Psoas muscle (tissue), 8 donors: ENCODE measurements at regions of chr10 and their contacts with region 1.

Region 1: GRCh38 chr10:68735119-68735518 is 14.1 kb downstream of the CCAR1 start:
- DNase-seq: no peak
- ATAC-seq: no peak
- H3K4me3 ChIP-seq: no peak overlapping the region
- H3K27ac ChIP-seq: no peak overlapping the region
- H3K4me1 ChIP-seq: peaks cover 6% of the 10 kb centered on the region
- H3K27me3 ChIP-seq: no peaks in the 10 kb centered on the region
- CTCF ChIP-seq: no peak

Region 2: DNA sequence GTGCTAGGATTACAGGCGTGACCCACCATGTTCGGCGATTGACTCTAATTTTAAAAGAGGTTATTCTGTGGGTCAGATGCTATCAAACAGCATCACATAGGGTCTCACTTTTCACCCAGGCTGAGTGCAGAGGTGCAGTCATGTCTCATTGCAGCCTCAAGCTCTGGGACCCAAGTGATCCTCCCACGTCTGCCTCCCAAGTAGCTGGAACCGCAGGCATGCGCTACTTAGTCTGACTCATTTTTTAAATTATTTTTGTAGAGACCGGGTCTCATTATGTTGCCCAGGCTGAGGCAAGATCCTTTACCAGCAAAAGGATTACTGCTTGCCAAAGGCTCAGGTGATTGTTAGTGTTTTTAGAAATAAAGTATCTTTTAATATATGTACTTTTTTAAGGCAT is 49.4 kb after region 1 on chr10:
- intact Hi-C with region 1: loop called in 1 of 2 experiments (anchors 5 kb)
- DNase-seq: no peak
- ATAC-seq: no peak
- H3K4me3 ChIP-seq: no peak overlapping the region
- H3K27ac ChIP-seq: no peak overlapping the region
- H3K4me1 ChIP-seq: no peaks in the 10 kb centered on the region
- H3K27me3 ChIP-seq: no peaks in the 10 kb centered on the region
- CTCF ChIP-seq: no peak